ENCODE measurements at regions of chrX and their contacts with region 1.

Region 1: DNA sequence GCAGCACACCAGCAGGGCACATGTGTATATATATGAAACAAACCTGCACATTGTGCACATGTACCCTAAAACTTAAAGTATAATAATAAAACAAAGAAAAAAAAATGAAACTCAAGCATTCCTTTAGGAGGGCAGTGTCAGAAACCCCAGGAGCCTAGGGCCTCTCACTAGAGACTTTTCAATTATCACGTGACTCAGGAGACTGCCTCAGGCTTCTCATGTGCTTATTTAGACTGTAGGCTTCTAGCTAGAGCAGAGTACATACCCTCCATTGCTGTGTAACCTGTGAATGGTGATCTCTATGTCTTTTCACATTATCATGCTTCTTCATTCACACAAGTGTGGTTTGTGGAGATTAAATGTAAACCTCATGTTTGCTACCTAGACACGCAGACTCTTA is 48.2 kb upstream of the MAGEH1 start:
- DNase-seq: no peak
- H3K4me3 ChIP-seq: no peak overlapping the region
- H3K27ac ChIP-seq: no peak overlapping the region
- H3K4me1 ChIP-seq: no peaks in the 10 kb centered on the region
- H3K27me3 ChIP-seq: no peaks in the 10 kb centered on the region
- CTCF ChIP-seq: no peak
- POLR2A ChIP-seq: no peak

Region 2: GRCh38 chrX:55524487-55524886 is 120.8 kb after region 1 on chrX:
- intact Hi-C with region 1: loop called (anchors 10 kb)
- DNase-seq: no peak
- H3K4me3 ChIP-seq: no peak overlapping the region
- H3K27ac ChIP-seq: no peak overlapping the region
- H3K4me1 ChIP-seq: no peaks in the 10 kb centered on the region
- H3K27me3 ChIP-seq: no peaks in the 10 kb centered on the region
- CTCF ChIP-seq: no peak
- POLR2A ChIP-seq: no peak

Measured in vagina (tissue), 2 donors.